Activated T-helper 1 cell treated with anti-CD3 and anti-CD28 coated beads, Interleukin-12 subunit alpha, Interleukin-12 subunit beta, Interleukin-2, Interleukin-4 antibody, amounts not matched to agents 30 ng/mL and 10 ng/mL and 1 ng/mL, durations not matched to agents 14 hours and 24 hours and 36 hours (primary cell): ENCODE measurements at regions of chr16 and their contacts with region 1.

Region 1: DNA sequence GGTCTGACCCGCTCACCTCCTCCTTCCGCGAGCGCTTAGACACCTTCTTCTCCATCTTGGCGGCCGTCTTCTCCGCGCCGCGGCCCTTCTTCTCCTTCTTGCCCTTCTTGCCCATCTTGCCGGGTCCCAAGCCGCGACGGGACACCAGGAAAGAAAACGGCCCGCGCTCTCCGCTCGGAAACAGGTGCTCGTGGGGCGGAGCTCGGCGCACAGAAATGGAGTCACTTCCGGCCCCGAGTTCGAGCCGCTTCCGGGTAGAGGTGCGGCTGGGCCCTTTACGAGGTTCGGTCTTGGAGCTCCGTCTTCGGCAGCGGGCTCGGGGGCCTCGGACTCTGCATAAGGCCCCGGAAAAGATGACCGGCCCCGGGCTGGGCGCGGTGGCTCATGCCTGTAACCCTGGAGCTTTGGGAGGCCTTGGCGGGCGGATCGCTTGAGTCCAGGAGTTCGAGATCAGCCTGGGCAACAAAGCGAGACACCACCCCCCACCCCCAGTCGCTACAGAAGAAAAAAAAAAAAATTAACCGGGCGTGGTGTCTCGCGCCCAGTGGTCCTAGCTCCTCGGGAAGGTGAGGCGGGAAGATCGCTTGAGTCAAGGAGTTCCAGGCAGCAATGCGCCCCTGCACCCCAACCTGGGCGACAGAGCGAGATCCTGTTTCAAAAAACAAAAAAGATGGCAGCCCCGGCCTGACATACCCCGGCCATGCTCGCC is at the start of gene KLHDC4:
- DNase-seq: peak; percentile 90
- H3K4me3 Mint-ChIP-seq: peak within 1 kb of the TSS; percentile 100
- H3K27ac Mint-ChIP-seq: peak within 1 kb of the TSS; percentile 100
- H3K4me1 Mint-ChIP-seq: peaks cover 30% of the 10 kb centered on the region
- H3K27me3 Mint-ChIP-seq: peaks cover 1% of the 10 kb centered on the region
- total RNA-seq, gene KLHDC4: 85.6 and 93.7 TPM in 2 replicates

Region 2: GRCh38 chr16:86554917-86555703 is 1210.8 kb before region 1 on chr16 and contains the start of gene MTHFSD:
- intact Hi-C with region 1: loop called (anchors 10 kb)
- DNase-seq: peak; percentile 94
- H3K4me3 Mint-ChIP-seq: peak within 1 kb of the TSS; percentile 86
- H3K27ac Mint-ChIP-seq: peak within 1 kb of the TSS; percentile 95
- H3K4me1 Mint-ChIP-seq: peaks cover 20% of the 10 kb centered on the region
- H3K27me3 Mint-ChIP-seq: peaks cover 5% of the 10 kb centered on the region
- total RNA-seq, gene MTHFSD: 30.6 and 31.8 TPM in 2 replicates

Region 3: DNA sequence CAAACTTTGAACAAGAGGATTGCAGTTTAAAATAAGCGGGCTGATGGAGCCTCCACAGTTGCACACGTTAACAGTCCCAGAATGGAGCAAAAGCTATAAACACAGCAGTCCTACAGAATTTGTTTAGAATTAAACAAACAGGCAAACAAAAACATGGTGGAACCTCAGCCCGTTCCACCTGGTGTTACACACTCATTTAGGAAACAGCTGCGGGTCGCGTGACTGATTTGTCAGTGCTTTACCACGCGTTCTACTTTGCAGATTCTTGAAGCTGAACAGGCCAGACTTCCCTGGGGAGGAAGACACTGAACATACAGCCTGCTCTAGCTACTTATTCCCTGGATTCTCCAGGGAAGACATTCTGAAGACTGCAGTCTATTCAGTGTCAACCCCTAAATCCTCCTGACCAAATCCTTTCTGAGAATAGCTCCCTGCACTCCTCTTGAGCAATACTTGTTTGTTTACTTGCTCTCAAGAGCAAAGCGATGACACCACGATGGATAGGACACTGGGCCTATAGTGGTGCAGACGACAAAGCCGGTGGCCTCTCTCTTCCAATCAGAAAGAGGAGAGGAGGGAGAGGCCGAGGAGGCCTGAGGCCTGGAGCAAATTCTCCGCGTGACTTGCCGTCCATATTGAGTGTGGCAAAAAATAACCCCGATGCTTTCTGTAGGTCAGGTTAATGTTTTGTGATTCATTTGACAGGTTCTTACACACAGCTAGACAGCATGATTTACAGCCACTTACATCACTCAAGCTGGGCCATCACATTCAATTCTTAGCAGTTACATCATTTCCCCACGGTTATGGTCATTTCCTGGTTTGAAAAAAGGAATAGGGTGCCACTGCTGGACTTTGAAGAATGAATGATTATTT is 377.8 kb before region 1 on chr16:
- intact Hi-C with region 1: loop called (anchors 2 kb)
- DNase-seq: peak; percentile 88
- H3K4me3 Mint-ChIP-seq: peak overlapping the region; percentile 61
- H3K27ac Mint-ChIP-seq: peak overlapping the region; percentile 89
- H3K4me1 Mint-ChIP-seq: peaks cover 34% of the 10 kb centered on the region
- H3K27me3 Mint-ChIP-seq: peaks cover 2% of the 10 kb centered on the region

Region 4: GRCh38 chr16:87550496-87550961 is 215.4 kb before region 1 on chr16:
- intact Hi-C with region 1: loop called (anchors 1 kb)
- DNase-seq: peak; percentile 42
- H3K4me3 Mint-ChIP-seq: no peak overlapping the region
- H3K27ac Mint-ChIP-seq: no peak overlapping the region
- H3K4me1 Mint-ChIP-seq: no peaks in the 10 kb centered on the region
- H3K27me3 Mint-ChIP-seq: peaks cover 4% of the 10 kb centered on the region

Region 5: GRCh38 chr16:87778830-87779579 is 13.1 kb after region 1 on chr16:
- intact Hi-C with region 1: loop called (anchors 1 kb)
- DNase-seq: peak; percentile 91
- H3K4me3 Mint-ChIP-seq: peak overlapping the region; percentile 70
- H3K27ac Mint-ChIP-seq: peak overlapping the region; percentile 91
- H3K4me1 Mint-ChIP-seq: peaks cover 51% of the 10 kb centered on the region
- H3K27me3 Mint-ChIP-seq: no peaks in the 10 kb centered on the region

Region 6: GRCh38 chr16:88569985-88570690 is 804.2 kb after region 1 on chr16 and contains the start of gene ZC3H18:
- intact Hi-C with region 1: loop called (anchors 1 kb)
- DNase-seq: peak; percentile 96
- H3K4me3 Mint-ChIP-seq: peak within 1 kb of the TSS; percentile 92
- H3K27ac Mint-ChIP-seq: peak within 1 kb of the TSS; percentile 86
- H3K4me1 Mint-ChIP-seq: peaks cover 40% of the 10 kb centered on the region
- H3K27me3 Mint-ChIP-seq: no peaks in the 10 kb centered on the region
- total RNA-seq, gene ZC3H18: 115 and 116 TPM in 2 replicates